ENCODE measurements at regions of chr15 and their contacts with region 1.

Region 1: GRCh38 chr15:81265944-81266775 is 57.8 kb downstream of the STARD5 start:
- DNase-seq: peak; percentile 92
- ATAC-seq: peak; percentile 83
- H3K4me3 Mint-ChIP-seq: peak overlapping the region; percentile 56
- H3K27ac Mint-ChIP-seq: peak overlapping the region; percentile 82
- H3K4me1 Mint-ChIP-seq: peaks cover 49% of the 10 kb centered on the region
- H3K27me3 Mint-ChIP-seq: peaks cover 3% of the 10 kb centered on the region
- CTCF ChIP-seq: peak; percentile 68

Region 2: GRCh38 chr15:80989518-80990478 is 276.4 kb before region 1 on chr15 and contains the start of gene MESD:
- CTCF ChIA-PET with region 1: interaction called, 21 read pairs
- POLR2A ChIA-PET with region 1: no interaction called
- intact Hi-C with region 1: loop called (anchors 10 kb)
- DNase-seq: peak; percentile 99
- ATAC-seq: peak; percentile 99
- H3K4me3 Mint-ChIP-seq: peak within 1 kb of the TSS; percentile 95
- H3K27ac Mint-ChIP-seq: peak within 1 kb of the TSS; percentile 93
- H3K4me1 Mint-ChIP-seq: peaks cover 44% of the 10 kb centered on the region
- H3K27me3 Mint-ChIP-seq: no peaks in the 10 kb centered on the region
- CTCF ChIP-seq: no peak
- total RNA-seq, gene MESD: 15.8 to 16.5 TPM

Region 3: GRCh38 chr15:81106560-81106959 is 159.6 kb before region 1 on chr15:
- CTCF ChIA-PET with region 1: interaction called, 195 read pairs
- POLR2A ChIA-PET with region 1: interaction called, 3 read pairs
- intact Hi-C with region 1: loop called (anchors 1 kb)
- DNase-seq: peak; percentile 62
- ATAC-seq: peak; percentile 64
- H3K4me3 Mint-ChIP-seq: no peak overlapping the region
- H3K27ac Mint-ChIP-seq: no peak overlapping the region
- H3K4me1 Mint-ChIP-seq: peaks cover 4% of the 10 kb centered on the region
- H3K27me3 Mint-ChIP-seq: peaks cover 14% of the 10 kb centered on the region
- CTCF ChIP-seq: peak; percentile 73

Region 4: DNA sequence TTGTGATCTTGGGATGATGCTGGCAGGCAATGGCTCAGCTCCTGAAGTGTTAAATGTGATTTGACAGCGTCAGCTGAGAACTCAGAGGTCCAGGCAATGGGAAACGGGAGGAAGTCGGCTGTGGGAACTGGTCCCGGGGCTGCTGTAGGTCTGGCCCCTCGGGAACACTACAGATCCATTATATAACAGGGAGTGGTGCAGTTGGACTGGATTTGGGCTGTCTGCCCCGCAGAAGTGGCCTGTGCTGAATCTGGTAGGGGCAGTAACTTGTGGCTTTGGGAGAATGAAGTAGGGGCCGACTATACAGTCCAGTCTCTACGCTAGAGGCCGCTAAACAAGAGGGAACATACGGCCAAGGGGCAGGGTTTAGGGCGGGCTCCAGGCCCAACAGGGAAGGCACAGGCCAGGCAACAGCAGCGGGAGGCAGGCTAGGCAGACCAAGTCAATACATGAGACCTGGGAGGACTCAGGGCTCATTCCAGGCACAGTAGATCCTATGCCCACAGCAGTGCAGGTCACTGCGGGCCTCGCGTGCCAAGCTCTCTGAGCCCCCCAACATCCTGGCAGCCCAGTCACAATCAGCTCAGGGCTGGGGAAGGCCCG is 89.8 kb before region 1 on chr15:
- CTCF ChIA-PET with region 1: interaction called, 21 read pairs
- POLR2A ChIA-PET with region 1: no interaction called
- intact Hi-C with region 1: no loop called
- DNase-seq: no peak
- ATAC-seq: no peak
- H3K4me3 Mint-ChIP-seq: no peak overlapping the region
- H3K27ac Mint-ChIP-seq: no peak overlapping the region
- H3K4me1 Mint-ChIP-seq: no peaks in the 10 kb centered on the region
- H3K27me3 Mint-ChIP-seq: peaks cover 12% of the 10 kb centered on the region
- CTCF ChIP-seq: no peak

Region 5: DNA sequence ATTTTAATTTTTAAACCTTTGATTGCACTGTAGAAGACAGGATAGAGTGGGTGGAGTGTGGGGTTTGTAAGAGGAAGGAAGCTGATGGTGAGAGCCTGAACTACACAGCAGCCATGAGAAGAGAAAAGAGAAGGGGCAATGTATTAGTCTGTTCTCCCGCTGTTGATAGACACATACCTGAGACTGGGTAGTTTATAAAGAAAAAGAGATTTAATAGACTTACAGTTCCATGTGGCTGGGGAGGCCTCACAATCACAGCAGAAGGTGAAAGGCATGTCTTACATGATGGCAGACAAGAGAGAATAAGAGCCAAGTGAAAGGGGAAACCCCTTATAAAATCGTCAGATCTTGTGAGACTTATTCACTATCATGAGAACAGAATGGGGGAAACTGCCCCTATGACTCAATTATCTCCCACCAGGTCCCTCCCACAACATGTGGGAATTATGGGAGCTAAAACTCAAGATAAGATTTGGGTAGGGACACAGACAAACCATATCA is 20.5 kb after region 1 on chr15:
- CTCF ChIA-PET with region 1: interaction called, 52 read pairs
- POLR2A ChIA-PET with region 1: interaction called, 4 read pairs
- intact Hi-C with region 1: no loop called
- DNase-seq: peak; percentile 41
- ATAC-seq: peak; percentile 89
- H3K4me3 Mint-ChIP-seq: peak overlapping the region; percentile 79
- H3K27ac Mint-ChIP-seq: peak overlapping the region; percentile 97
- H3K4me1 Mint-ChIP-seq: peaks cover 78% of the 10 kb centered on the region
- H3K27me3 Mint-ChIP-seq: no peaks in the 10 kb centered on the region
- CTCF ChIP-seq: no peak

Region 6: DNA sequence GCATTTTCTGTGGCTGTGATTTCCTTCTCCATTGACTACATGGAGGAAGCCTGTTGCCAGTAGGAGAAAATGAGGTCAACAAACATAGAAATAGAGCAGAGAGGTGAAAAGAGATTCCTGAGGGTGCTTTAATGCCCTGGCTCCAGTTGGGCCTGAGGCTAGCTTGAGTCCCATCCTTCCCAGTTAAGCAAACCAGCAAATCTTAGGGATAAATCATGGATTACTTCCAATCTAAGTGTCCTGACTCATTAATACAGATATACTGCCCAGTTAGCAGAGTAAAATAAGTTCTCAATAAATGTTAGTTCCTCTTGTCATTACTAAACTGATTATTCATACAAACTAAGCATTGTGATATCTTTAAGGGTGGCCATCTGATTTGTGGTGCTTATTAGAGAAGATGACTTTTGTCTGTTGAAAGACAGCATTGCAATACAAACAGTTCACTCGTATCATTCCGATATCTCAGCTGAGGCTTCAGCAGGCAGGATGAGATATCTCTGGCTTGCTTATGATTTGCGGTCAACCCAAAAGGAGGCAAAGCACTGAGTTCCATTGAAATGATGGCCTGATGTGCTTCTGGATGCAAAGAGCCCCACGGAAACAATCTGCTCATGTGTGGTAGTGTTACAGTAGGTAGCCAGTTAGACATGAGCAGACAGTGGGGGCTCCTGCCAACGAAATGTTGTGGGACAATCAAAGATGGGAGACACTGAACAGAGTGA is 64.4 kb after region 1 on chr15:
- CTCF ChIA-PET with region 1: interaction called, 50 read pairs
- POLR2A ChIA-PET with region 1: interaction called, 3 read pairs
- intact Hi-C with region 1: no loop called
- DNase-seq: no peak
- ATAC-seq: no peak
- H3K4me3 Mint-ChIP-seq: no peak overlapping the region
- H3K27ac Mint-ChIP-seq: no peak overlapping the region
- H3K4me1 Mint-ChIP-seq: peaks cover 19% of the 10 kb centered on the region
- H3K27me3 Mint-ChIP-seq: no peaks in the 10 kb centered on the region
- CTCF ChIP-seq: no peak